ENCODE measurements at regions of chr7 and their contacts with region 1.

Region 1: GRCh38 chr7:29748286-29749108 is 57.8 kb upstream of the WIPF3 start:
- DNase-seq: no peak
- H3K4me3 ChIP-seq: no peak overlapping the region
- H3K27ac ChIP-seq: no peak overlapping the region
- H3K4me1 ChIP-seq: no peaks in the 10 kb centered on the region
- H3K27me3 ChIP-seq: no peaks in the 10 kb centered on the region
- CTCF ChIP-seq: peak in 3 of 4 experiments; percentile 40 to 59 (median 44)
- POLR2A ChIP-seq: no peak

Region 2: DNA sequence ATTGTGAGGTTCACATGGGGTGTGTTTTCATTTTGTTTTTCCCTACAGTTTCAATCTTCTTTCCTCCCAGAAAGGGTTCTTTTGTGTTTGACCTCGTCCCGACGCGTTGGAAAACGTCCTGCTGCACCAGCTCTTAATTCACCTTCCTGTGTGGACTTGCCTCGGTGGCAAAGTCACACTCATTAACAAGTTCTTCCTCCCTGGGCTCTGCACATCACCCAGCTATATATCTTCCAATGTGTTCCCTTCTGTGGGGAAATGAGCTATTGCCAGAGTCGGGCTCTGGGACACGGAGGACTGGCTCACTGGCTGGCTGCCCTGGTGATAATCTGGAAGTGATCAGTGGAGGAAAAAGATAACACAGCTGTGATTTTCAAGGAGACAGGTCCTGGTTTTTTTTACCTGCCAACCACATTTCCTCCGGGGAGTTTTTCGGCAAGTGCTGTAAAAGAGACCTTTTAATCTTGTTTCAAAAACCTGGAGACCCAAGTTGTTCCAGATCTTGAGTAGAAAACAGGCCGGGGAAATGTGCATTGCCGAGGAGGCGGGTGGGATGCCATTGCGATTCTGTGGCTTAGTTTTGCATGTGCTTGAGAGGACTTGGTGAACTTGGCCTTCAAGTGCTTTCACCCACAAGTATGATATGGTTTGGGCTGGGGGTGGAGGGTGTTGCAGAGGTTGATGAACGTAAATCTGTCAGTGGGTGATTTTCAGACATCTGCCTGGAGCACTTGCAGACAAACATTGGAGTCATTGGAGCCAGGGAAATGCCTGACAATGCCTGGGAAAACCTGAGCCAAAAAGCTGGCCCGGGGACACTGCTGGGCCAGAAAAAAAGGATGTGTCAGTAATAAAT is 1432.7 kb before region 1 on chr7:
- intact Hi-C with region 1: no loop called
- DNase-seq: peak; percentile 67
- H3K4me3 ChIP-seq: no peak overlapping the region
- H3K27ac ChIP-seq: no peak overlapping the region
- H3K4me1 ChIP-seq: no peaks in the 10 kb centered on the region
- H3K27me3 ChIP-seq: no peaks in the 10 kb centered on the region
- CTCF ChIP-seq: no peak
- POLR2A ChIP-seq: no peak

Region 3: GRCh38 chr7:29871787-29872396 is 123.4 kb after region 1 on chr7:
- intact Hi-C with region 1: loop called (anchors 5 kb)
- DNase-seq: no peak
- H3K4me3 ChIP-seq: no peak overlapping the region
- H3K27ac ChIP-seq: no peak overlapping the region
- H3K4me1 ChIP-seq: no peaks in the 10 kb centered on the region
- H3K27me3 ChIP-seq: no peaks in the 10 kb centered on the region
- CTCF ChIP-seq: no peak
- POLR2A ChIP-seq: no peak

Region 4: GRCh38 chr7:30116771-30117170 is 368.3 kb after region 1 on chr7:
- intact Hi-C with region 1: no loop called
- DNase-seq: no peak
- H3K4me3 ChIP-seq: no peak overlapping the region
- H3K27ac ChIP-seq: no peak overlapping the region
- H3K4me1 ChIP-seq: no peaks in the 10 kb centered on the region
- H3K27me3 ChIP-seq: no peaks in the 10 kb centered on the region
- CTCF ChIP-seq: no peak
- POLR2A ChIP-seq: no peak